PC-3 (cell line): ENCODE measurements at regions of chr12 and their contacts with region 1.

Region 1: GRCh38 chr12:50542448-50542847 is 37.7 kb downstream of the DIP2B start:
- DNase-seq: peak; percentile 93
- ATAC-seq: peak; percentile 89
- H3K4me3 ChIP-seq: no peak overlapping the region
- H3K27ac ChIP-seq: peak overlapping the region; percentile 95
- H3K4me1 ChIP-seq: peaks cover 62% of the 10 kb centered on the region
- H3K27me3 ChIP-seq: no peaks in the 10 kb centered on the region
- CTCF ChIP-seq: no peak

Region 2: GRCh38 chr12:50338920-50339645 is 203.4 kb before region 1 on chr12:
- CTCF ChIA-PET with region 1: no interaction called
- POLR2A ChIA-PET with region 1: no interaction called
- intact Hi-C with region 1: no loop called
- DNase-seq: no peak
- ATAC-seq: no peak
- H3K4me3 ChIP-seq: no peak overlapping the region
- H3K27ac ChIP-seq: no peak overlapping the region
- H3K4me1 ChIP-seq: no peaks in the 10 kb centered on the region
- H3K27me3 ChIP-seq: no peaks in the 10 kb centered on the region
- CTCF ChIP-seq: no peak

Region 3: DNA sequence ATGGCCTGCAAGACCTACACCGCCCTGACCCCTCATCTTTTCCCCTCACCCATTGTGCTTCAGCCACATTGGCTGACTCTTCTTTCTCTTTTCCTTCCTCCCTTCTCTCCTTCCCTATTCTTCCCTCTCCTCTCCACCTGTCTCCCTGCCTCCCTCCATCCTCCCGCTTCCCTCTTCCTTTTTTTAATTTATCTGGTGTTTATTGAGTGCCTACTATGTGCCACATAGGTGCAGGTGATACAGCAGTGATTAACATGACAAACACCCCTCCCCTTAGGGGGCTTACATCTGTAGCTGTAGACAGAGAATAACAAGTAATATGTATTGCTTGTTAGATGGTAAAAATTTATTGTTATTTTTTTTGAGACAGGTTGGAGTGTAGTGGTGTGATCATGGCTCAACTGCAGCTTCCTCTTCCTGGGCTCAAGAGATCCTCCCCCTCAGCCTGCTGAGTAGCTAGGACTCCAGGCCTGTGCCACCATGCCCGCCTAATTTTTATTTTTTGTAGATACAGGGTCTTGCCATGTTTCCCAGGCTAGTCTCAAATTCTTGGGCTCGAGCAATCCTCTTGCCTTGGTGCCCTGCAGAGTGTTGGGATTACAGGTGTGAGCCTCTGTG is 17.9 kb before region 1 on chr12:
- CTCF ChIA-PET with region 1: no interaction called
- POLR2A ChIA-PET with region 1: no interaction called
- intact Hi-C with region 1: no loop called
- DNase-seq: no peak
- ATAC-seq: no peak
- H3K4me3 ChIP-seq: no peak overlapping the region
- H3K27ac ChIP-seq: peak overlapping the region; percentile 16; the same call in 1 of the 2 replicates
- H3K4me1 ChIP-seq: peaks cover 34% of the 10 kb centered on the region
- H3K27me3 ChIP-seq: no peaks in the 10 kb centered on the region
- CTCF ChIP-seq: no peak

Region 4: GRCh38 chr12:50557421-50557820 is 15.0 kb after region 1 on chr12:
- CTCF ChIA-PET with region 1: no interaction called
- POLR2A ChIA-PET with region 1: no interaction called
- intact Hi-C with region 1: loop called (anchors 2 kb)
- DNase-seq: no peak
- ATAC-seq: no peak
- H3K4me3 ChIP-seq: no peak overlapping the region
- H3K27ac ChIP-seq: peak overlapping the region; percentile 88
- H3K4me1 ChIP-seq: peaks cover 26% of the 10 kb centered on the region
- H3K27me3 ChIP-seq: no peaks in the 10 kb centered on the region
- CTCF ChIP-seq: no peak

Region 5: DNA sequence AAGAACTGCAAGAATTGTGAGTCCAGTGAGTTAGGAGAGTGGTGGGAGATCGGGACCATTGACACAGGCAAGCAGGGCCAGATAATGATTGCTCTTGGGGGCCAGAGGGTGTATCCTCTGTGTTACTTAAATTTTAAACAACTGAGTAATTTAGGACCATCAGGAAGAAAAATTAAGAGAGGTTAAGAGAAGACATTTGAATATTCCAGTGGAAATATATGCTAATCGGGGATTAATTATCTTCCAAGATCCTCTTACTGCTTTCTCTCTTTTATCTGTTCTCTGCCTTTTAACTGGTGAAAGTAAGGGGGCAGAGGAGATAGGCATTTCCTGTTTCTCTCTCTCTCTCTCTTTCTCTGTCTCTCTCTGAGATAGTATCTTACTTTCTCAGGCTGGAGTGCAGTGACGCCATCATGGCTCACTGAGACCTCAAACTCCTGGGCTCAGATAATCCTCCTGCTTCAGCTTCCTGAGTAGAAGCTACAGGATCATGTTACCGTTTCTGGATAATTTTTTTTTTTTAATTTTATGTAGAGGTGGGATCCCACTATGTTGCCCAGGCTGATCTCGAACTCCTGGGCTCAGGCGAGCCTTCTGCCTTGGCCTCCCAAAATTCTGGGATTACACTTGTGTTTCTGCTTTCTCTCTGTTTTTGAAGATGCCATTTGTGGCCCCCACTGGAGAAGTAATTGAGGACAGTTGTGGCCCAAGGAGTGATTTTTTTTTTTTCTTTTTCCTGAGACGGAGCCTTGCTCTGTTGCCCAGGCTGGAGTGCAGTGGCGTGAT is 47.4 kb after region 1 on chr12:
- CTCF ChIA-PET with region 1: no interaction called
- POLR2A ChIA-PET with region 1: interaction called, 3 read pairs
- intact Hi-C with region 1: loop called (anchors 10 kb)
- DNase-seq: peak; percentile 87
- ATAC-seq: peak; percentile 87
- H3K4me3 ChIP-seq: peak overlapping the region; percentile 5; the same call in 1 of the 2 replicates
- H3K27ac ChIP-seq: peak overlapping the region; percentile 87
- H3K4me1 ChIP-seq: peaks cover 26% of the 10 kb centered on the region
- H3K27me3 ChIP-seq: no peaks in the 10 kb centered on the region
- CTCF ChIP-seq: no peak

Region 6: GRCh38 chr12:50637870-50638481 is 95.5 kb after region 1 on chr12:
- CTCF ChIA-PET with region 1: interaction called, 3 read pairs
- POLR2A ChIA-PET with region 1: no interaction called
- intact Hi-C with region 1: loop called (anchors 10 kb)
- DNase-seq: peak; percentile 73
- ATAC-seq: no peak
- H3K4me3 ChIP-seq: no peak overlapping the region
- H3K27ac ChIP-seq: peak overlapping the region; percentile 22
- H3K4me1 ChIP-seq: peaks cover 54% of the 10 kb centered on the region
- H3K27me3 ChIP-seq: no peaks in the 10 kb centered on the region
- CTCF ChIP-seq: peak; percentile 88